Right ventricle myocardium superior (tissue), 1 donor: ENCODE measurements at regions of chr2 and their contacts with region 1.

Region 1: DNA sequence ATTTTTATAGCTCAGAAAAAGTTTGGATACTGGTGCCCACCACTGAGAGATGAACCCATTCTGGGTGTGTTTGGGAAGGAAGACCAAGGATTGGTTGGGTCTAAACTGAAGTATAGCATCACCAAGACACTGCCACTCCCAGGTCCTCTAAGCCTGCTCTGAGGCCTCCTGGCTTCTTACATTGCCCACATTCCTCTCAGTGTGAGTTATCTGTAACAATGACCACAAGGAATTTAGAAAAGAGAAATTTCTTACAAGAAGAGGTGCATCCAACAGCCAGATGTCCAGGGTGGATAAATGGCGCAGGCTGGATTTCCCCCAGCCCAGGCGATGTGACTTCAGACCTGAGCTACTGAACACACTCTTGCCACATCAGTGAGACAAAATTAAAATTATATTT is 1.6 kb upstream of the GPR45 start:
- DNase-seq: no peak
- ATAC-seq: no peak

Region 2: GRCh38 chr2:105114551-105114950 is 125.4 kb before region 1 on chr2:
- intact Hi-C with region 1: loop called (anchors 2 kb)
- DNase-seq: no peak
- ATAC-seq: peak; percentile 62

Region 3: DNA sequence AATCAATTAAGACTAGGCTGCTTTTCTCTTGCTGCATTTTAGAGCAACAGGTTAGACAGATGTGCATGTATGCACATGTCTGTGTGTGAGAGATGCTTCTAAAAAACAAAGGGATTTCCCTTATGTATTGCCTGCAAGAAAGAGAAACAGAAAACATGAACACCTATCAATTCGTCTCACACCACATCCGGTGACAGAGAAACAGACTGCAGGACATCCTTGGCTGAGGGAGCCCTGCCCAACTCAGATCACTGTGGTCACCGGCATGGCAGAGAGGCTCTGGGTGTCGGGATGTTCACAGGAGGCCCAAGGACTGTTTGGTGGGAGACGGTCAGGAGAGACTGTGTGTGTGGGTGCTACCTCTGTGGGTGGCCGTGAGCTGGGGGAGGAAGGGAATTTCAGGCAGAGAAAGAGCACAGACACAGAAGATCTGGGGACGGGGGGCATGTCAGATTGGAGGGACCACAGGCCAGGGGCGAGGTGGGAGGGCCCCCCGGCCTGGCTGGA is 134.0 kb after region 1 on chr2:
- intact Hi-C with region 1: no loop called
- DNase-seq: no peak
- ATAC-seq: peak; percentile 3